Activated CD4-positive, alpha-beta T cell treated with anti-CD3 and anti-CD28 coated beads for 36 hours (primary cell): ENCODE measurements at regions of chr11 and their contacts with region 1.

Region 1: DNA sequence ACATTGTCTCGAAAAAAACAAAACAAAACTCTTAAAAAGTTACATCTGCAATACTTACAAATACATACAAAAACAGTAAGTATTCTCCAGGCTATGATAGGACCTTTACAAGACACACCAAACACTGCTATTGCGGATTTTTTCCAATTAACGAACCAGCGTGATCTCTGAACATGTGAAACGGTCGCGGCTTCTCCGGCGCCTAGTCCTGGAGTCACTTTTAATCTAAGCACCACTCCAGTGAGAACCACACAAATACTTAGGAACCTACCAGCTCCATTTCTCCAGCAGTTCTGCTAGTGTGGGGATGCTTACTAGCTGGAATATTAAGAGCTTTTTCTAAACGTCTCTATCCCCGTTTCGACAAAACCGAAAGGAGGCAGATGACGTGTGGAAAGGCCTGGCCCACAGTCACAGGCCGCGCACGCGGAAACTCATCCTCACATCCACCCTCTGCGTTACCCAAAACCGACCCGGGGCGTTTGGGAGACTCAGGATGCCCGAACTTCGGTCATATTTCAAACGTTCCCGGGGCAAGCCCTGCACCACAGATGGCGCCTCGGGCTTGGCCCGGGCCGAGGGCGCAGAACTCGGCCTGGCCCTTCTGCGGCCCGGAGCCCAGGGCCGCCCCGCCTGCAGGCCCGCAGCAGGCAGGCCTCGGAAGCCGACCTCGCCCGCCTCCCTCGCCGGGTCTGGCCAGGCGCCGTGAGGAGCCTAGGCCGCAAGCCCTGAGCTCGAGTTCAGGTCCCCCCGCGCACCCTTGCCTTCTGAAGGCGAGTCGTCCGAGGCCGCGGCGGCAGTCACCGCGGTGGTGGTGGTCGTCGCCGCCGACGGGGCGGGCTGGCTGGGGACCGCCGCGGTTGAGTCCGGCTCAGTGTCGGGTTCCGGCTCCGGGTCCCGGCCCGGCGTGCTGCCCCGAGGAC is 575 bp downstream of the FNBP4 start:
- DNase-seq: peak; percentile 89
- ATAC-seq: peak; percentile 37
- H3K4me3 Mint-ChIP-seq: peak overlapping the region; percentile 98
- H3K27ac Mint-ChIP-seq: peak overlapping the region; percentile 98
- H3K4me1 Mint-ChIP-seq: peaks cover 18% of the 10 kb centered on the region
- H3K27me3 Mint-ChIP-seq: no peaks in the 10 kb centered on the region

Region 2: DNA sequence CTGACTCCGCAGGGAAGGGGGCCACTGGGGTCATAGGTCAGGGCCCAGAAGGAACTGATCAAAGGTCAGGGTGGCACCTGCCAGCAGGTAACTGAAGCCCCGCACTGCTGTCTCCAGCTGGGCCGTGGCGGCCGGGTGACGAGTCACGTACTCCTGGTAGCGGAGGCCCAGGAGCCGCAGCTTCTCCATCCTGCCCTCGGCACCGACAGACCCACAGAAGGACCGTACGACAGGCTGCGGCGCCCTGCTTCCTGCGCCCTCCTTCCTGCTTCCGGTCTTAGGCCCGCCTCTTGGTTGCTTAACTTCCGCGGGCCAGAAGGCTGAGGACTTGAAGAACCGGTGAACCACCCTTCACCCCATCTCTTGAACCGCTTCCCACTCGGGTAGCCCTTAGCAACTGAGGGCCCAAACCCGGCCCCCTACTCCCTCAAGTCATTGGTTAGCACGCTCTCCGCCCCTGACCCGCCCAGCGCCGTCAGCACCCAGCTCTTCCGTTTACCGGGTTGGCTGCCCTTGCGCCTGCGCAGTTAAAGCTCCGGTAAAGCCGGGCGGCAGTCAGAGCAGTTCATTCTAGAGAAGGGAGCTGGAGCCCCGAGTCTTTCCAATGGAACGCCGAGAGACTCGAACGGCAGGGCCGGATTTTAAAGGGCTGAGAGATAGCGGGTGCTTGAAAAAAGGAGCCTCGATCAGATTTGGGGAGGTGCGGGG is 1848.8 kb before region 1 on chr11 and contains the start of gene PEX16:
- CTCF ChIA-PET with region 1: no interaction called
- POLR2A ChIA-PET with region 1: no interaction called
- intact Hi-C with region 1: loop called in 1 of 2 experiments (anchors 5 kb)
- DNase-seq: peak; percentile 97
- ATAC-seq: peak; percentile 94
- H3K4me3 Mint-ChIP-seq: peak within 1 kb of the TSS; percentile 96
- H3K27ac Mint-ChIP-seq: peak within 1 kb of the TSS; percentile 95
- H3K4me1 Mint-ChIP-seq: peaks cover 31% of the 10 kb centered on the region
- H3K27me3 Mint-ChIP-seq: peaks cover 3% of the 10 kb centered on the region
- total RNA-seq, gene PEX16: 28.1 to 33.4 TPM

Region 3: DNA sequence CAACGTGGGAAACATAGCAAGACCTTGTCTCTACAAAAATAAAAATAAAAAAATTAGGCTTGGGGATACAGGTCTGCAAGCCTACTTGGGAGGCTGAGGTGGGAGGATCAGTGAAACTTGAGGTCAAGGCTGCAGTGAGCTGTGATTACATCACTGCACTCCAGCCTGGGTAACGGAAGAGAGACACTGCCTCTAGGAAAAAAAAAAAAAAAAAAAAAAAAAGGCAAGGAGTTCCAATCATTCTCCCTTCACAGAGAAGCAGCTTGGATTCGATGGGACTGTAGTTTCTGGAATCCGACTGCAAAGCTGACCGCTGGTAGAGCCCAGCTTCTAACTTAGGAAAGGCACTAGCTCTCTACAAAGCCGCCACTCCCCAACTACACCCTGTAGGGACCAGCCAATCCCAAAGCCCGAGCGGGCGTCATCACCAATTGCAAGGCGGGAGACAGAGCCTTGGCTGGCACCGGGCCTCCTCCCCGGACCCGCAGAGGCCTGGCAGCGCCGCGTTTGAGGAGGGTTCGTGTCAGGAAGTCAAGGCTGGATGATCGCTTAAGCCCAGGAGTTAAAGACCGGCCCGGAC is 552.5 kb before region 1 on chr11:
- CTCF ChIA-PET with region 1: no interaction called
- POLR2A ChIA-PET with region 1: interaction called, 5 read pairs
- intact Hi-C with region 1: loop called in 1 of 2 experiments (anchors 1 kb)
- DNase-seq: peak; percentile 94
- ATAC-seq: peak; percentile 80
- H3K4me3 Mint-ChIP-seq: peak overlapping the region; percentile 99
- H3K27ac Mint-ChIP-seq: peak overlapping the region; percentile 100
- H3K4me1 Mint-ChIP-seq: peaks cover 31% of the 10 kb centered on the region
- H3K27me3 Mint-ChIP-seq: no peaks in the 10 kb centered on the region

Region 4: GRCh38 chr11:47509077-47509536 is 257.5 kb before region 1 on chr11:
- CTCF ChIA-PET with region 1: no interaction called
- POLR2A ChIA-PET with region 1: interaction called, 10 read pairs
- intact Hi-C with region 1: loop called in 1 of 2 experiments (anchors 10 kb)
- DNase-seq: peak; percentile 16
- ATAC-seq: peak; percentile 30
- H3K4me3 Mint-ChIP-seq: peak overlapping the region; percentile 48
- H3K27ac Mint-ChIP-seq: peak overlapping the region; percentile 90
- H3K4me1 Mint-ChIP-seq: peaks cover 91% of the 10 kb centered on the region
- H3K27me3 Mint-ChIP-seq: no peaks in the 10 kb centered on the region

Region 5: GRCh38 chr11:47667135-47667534 is 99.4 kb before region 1 on chr11:
- CTCF ChIA-PET with region 1: no interaction called
- POLR2A ChIA-PET with region 1: interaction called, 3 read pairs
- intact Hi-C with region 1: loop called in 1 of 2 experiments (anchors 1 kb)
- DNase-seq: no peak
- ATAC-seq: no peak
- H3K4me3 Mint-ChIP-seq: no peak overlapping the region
- H3K27ac Mint-ChIP-seq: no peak overlapping the region
- H3K4me1 Mint-ChIP-seq: peaks cover 27% of the 10 kb centered on the region
- H3K27me3 Mint-ChIP-seq: no peaks in the 10 kb centered on the region

Region 6: DNA sequence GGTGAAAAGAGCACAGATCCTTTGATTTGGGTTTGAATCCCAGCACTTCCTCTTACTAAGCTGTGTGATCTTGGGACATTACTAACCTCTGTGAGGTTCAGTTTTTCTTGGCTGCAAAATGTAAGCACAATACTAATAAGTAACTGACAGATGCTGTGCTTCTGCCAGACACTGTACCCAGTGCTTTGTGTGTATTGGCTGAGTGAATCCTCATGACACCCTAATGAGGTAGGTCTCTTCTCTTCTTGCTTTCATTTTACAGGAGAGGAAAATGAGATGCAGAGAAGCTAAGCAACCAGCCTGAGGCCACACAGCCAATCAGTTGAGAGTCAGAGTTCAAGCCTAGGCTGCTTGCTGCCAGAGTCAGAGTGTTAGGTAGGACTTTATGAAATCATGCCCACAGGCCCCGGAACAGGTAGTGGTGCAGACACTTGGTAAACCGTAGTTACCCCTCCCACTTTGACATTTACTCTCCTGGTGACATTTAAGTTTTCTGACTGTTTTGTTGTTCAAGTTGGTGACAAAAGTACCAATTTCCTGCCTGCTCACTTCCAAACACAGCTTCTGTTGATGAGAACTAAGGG is 235.0 kb after region 1 on chr11:
- CTCF ChIA-PET with region 1: no interaction called
- POLR2A ChIA-PET with region 1: no interaction called
- intact Hi-C with region 1: loop called (anchors 5 kb)
- DNase-seq: peak; percentile 90
- ATAC-seq: peak; percentile 86
- H3K4me3 Mint-ChIP-seq: peak overlapping the region; percentile 59
- H3K27ac Mint-ChIP-seq: peak overlapping the region; percentile 98
- H3K4me1 Mint-ChIP-seq: peaks cover 85% of the 10 kb centered on the region
- H3K27me3 Mint-ChIP-seq: no peaks in the 10 kb centered on the region